Activated CD4-positive, alpha-beta T cell treated with anti-CD3 and anti-CD28 coated beads for 36 hours (primary cell): ENCODE measurements at regions of chr1 and their contacts with region 1.

Region 1: DNA sequence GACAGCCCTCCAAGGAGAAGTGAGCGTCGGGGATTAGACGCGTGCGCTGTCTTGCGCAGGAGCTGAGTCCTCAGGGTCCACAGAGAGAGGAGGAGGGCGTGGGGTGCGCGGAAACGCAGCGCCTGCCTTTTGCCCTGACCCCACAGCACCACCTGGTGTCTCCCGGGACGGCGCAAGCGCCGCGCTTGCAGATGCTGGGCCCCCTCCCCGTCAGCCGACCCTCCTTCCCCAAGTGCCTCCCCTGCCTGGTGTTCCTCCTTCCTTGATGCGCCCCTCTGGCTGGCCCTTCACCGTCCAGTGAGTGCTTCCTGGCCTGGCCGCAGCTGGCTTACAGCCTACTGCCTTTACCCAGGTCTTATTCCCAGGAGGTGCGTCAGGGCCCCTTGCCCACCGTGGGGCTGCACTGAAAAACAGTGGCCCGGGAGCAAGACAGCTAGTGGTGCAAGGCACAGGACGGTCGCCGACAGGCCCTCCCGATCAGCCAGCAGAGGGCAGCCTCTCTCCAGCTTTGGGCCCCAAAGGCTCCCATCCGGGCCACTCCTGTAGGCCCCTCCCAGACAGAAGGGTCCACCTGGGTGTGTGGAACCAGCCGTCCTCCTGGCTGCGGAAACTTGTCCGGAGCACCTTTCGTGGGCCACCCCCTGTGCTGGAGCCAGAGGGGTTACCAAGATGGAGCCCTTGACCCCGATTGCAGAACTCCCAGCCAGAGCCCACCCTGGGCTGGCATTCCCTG is 12.9 kb upstream of the PHLDA3 start:
- DNase-seq: peak; percentile 89
- ATAC-seq: peak; percentile 90
- H3K4me3 Mint-ChIP-seq: peak overlapping the region; percentile 58
- H3K27ac Mint-ChIP-seq: no peak overlapping the region
- H3K4me1 Mint-ChIP-seq: peaks cover 19% of the 10 kb centered on the region
- H3K27me3 Mint-ChIP-seq: peaks cover 15% of the 10 kb centered on the region

Region 2: DNA sequence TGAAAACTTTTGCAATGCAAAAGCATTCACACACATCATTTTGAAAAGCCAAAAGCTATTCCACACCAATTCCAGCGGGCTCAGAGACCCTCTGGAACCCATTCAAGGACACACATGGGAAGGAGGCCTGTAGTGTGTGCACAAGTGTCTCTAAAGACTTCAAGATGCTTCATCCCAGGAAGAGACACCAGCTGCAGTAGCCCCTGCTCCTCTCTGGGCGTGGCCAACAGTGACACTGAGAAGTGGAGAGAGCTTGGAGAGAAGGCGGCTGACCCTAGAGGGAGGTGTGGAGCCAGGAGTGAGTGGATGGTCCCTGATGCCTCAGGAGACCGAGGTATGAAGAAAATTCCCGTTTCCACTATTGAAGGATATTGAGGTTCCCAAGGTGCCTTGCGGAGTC is 45.5 kb before region 1 on chr1:
- CTCF ChIA-PET with region 1: interaction called, 19 read pairs
- POLR2A ChIA-PET with region 1: no interaction called
- intact Hi-C with region 1: loop called in 1 of 2 experiments (anchors 1 kb)
- DNase-seq: no peak
- ATAC-seq: no peak
- H3K4me3 Mint-ChIP-seq: no peak overlapping the region
- H3K27ac Mint-ChIP-seq: no peak overlapping the region
- H3K4me1 Mint-ChIP-seq: peaks cover 6% of the 10 kb centered on the region
- H3K27me3 Mint-ChIP-seq: peaks cover 8% of the 10 kb centered on the region

Region 3: DNA sequence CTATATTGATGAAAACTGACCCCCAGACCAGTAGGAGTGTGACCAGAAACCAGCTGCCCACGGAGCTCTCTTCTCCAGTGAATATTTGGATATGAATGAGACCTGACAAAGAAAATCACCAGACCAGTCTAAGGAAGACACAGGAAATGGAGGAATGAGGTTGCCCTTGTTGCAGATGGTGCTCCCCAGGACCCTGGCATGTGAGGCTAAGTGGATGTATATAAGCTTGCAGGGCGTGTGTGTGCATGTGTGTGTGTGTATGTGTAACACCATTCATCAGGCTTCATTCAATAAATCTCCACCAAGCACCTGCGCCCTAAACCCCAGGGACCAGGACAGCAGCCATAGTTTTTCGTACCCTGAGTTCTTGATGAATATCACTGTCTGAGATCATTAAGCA is 27.3 kb before region 1 on chr1:
- CTCF ChIA-PET with region 1: interaction called, 67 read pairs
- POLR2A ChIA-PET with region 1: no interaction called
- intact Hi-C with region 1: loop called in 1 of 2 experiments (anchors 1 kb)
- DNase-seq: no peak
- ATAC-seq: no peak
- H3K4me3 Mint-ChIP-seq: no peak overlapping the region
- H3K27ac Mint-ChIP-seq: no peak overlapping the region
- H3K4me1 Mint-ChIP-seq: peaks cover 20% of the 10 kb centered on the region
- H3K27me3 Mint-ChIP-seq: peaks cover 15% of the 10 kb centered on the region

Region 4: GRCh38 chr1:201500670-201501120 is 18.8 kb after region 1 on chr1:
- CTCF ChIA-PET with region 1: interaction called, 45 read pairs
- POLR2A ChIA-PET with region 1: no interaction called
- intact Hi-C with region 1: no loop called
- DNase-seq: no peak
- ATAC-seq: no peak
- H3K4me3 Mint-ChIP-seq: no peak overlapping the region
- H3K27ac Mint-ChIP-seq: no peak overlapping the region
- H3K4me1 Mint-ChIP-seq: peaks cover 14% of the 10 kb centered on the region
- H3K27me3 Mint-ChIP-seq: no peaks in the 10 kb centered on the region

Region 5: DNA sequence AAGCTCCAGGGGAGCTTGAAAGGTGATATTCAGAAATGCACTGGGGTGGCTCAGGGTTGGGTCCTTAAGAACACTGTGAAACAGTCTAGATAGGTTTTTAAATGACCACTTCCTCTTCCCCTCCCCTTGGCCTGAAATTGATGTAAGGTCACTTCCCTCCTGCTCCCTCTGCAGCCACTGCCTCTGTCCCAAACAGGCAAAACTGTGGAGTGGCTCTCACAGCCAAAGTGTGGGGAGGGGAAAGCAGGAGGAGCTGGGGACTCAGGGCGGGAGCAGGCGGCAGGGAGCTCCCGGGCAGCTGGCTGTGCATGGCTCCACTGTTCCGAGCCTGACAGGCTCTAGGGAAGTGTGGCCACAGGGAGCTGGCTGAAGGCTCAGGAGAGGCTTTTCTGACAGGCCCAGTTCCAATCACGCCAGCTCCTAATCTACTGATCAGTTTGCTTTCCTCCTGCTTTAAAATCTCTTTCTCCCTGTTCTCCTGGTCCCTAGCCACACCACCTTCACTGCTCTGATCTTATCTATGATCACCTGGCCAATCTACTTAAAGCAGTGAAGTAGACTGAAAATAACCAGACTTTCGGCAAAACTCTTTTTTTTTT is 30.1 kb after region 1 on chr1:
- CTCF ChIA-PET with region 1: interaction called, 216 read pairs
- POLR2A ChIA-PET with region 1: interaction called, 4 read pairs
- intact Hi-C with region 1: loop called (anchors 1 kb)
- DNase-seq: no peak
- ATAC-seq: no peak
- H3K4me3 Mint-ChIP-seq: no peak overlapping the region
- H3K27ac Mint-ChIP-seq: no peak overlapping the region
- H3K4me1 Mint-ChIP-seq: peaks cover 10% of the 10 kb centered on the region
- H3K27me3 Mint-ChIP-seq: no peaks in the 10 kb centered on the region

Region 6: GRCh38 chr1:201538612-201539551 is 57.0 kb after region 1 on chr1 and contains the start of gene NAV1:
- CTCF ChIA-PET with region 1: interaction called, 12 read pairs
- POLR2A ChIA-PET with region 1: no interaction called
- intact Hi-C with region 1: no loop called
- DNase-seq: peak; percentile 15
- ATAC-seq: peak; percentile 27
- H3K4me3 Mint-ChIP-seq: peak within 1 kb of the TSS; percentile 55
- H3K27ac Mint-ChIP-seq: no peak within 1 kb of the TSS
- H3K4me1 Mint-ChIP-seq: peaks cover 15% of the 10 kb centered on the region
- H3K27me3 Mint-ChIP-seq: peaks cover 62% of the 10 kb centered on the region
- total RNA-seq, gene NAV1: 1.9 to 2.6 TPM

Region 7: GRCh38 chr1:203101915-203102634 is 1620.1 kb after region 1 on chr1:
- CTCF ChIA-PET with region 1: no interaction called
- POLR2A ChIA-PET with region 1: no interaction called
- intact Hi-C with region 1: no loop called
- DNase-seq: no peak
- ATAC-seq: no peak
- H3K4me3 Mint-ChIP-seq: no peak overlapping the region
- H3K27ac Mint-ChIP-seq: no peak overlapping the region
- H3K4me1 Mint-ChIP-seq: no peaks in the 10 kb centered on the region
- H3K27me3 Mint-ChIP-seq: peaks cover 18% of the 10 kb centered on the region